H1 (cell line): ENCODE measurements at regions of chr10 and their contacts with region 1.

Region 1: DNA sequence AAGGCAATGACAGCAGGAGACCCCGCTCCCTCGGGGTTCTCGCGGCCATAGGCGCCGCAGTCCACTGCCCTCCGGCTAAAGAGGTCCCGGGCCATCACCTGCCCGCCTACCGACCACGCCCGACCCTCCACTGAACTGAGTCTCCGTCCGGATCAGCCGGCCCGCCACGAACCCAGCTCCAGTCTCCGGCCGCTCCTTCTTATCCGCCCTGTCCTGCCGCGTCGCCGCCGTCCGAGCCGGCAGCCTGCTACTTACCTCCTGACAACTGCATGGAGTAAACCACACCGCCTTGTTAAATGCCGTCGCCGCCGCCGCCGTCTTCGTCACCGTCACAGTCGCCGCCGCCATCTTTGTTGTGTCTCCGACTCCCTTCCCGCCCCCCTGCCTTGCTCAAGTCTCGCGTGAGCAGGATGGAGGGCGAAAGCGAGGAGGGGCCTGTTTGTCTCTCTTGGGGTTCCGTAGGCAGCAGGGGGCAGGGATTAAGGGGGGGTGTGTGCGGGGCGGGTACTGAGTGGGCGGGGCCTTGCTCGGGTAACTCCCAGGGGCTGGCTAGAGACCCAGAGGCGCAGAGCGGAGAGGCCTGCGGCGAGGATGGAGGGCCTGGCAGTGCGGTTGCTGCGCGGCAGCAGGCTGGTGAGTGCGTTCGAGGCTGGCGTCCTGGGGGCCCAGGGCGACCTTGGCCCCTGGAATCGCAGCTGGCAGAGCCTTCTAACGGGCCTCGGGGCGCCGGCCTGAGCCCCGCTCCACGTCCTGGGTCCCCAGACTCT is at the starts of genes ACADSB and IKZF5:
- DNase-seq: peak; percentile 90 to 95
- H3K4me3 ChIP-seq: peak within 1 kb of the TSS; percentile 86 to 90 (median 88)
- H3K27ac ChIP-seq: peak within 1 kb of the TSS; percentile 63; the same call in 1 of the 2 replicates
- H3K4me1 ChIP-seq: peaks cover 0 to 2% (median under 1%) of the 10 kb centered on the region in 4 experiments; a peak in 2 of 7 replicates
- H3K27me3 ChIP-seq: peaks cover 2 to 23% (median 16%) of the 10 kb centered on the region in 4 experiments; a peak in 5 of 7 replicates
- CTCF ChIP-seq: no peak
- EP300 ChIP-seq: peak in 1 of 2 experiments; percentile 52; a peak in 1 of 3 replicates
- POLR2A ChIP-seq: peak; percentile 60 to 89
- RAD21 ChIP-seq: no peak
- total RNA-seq, gene ACADSB: 11.2 and 12.4 TPM in 2 replicates
- total RNA-seq, gene IKZF5: 15.3 and 15.7 TPM in 2 replicates

Region 2: DNA sequence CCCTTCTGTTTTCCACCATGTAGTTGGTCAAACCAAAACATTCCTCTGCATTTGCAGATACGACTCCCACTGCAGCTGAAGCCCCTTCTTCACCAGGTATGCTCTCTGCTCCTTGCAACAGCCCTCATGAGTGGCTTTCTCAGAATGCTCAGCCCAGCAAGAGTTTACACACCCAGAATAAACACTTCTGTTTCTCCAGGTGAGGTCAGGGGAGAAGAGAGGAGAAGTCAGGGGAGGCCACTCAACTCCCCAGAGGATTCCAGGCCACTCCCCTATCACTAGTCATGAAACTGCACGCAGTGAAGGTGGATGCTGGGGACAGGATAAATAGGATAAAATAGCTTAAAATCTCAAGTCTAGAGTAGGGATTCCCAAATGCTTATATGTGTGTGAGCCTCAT is 194.1 kb before region 1 on chr10:
- CTCF ChIA-PET with region 1: no interaction called
- POLR2A ChIA-PET with region 1: no interaction called
- DNase-seq: no peak
- H3K4me3 ChIP-seq: no peak overlapping the region
- H3K27ac ChIP-seq: no peak overlapping the region
- H3K4me1 ChIP-seq: no peaks in the 10 kb centered on the region
- H3K27me3 ChIP-seq: no peaks in the 10 kb centered on the region; a peak in 1 of 7 replicates
- CTCF ChIP-seq: no peak
- EP300 ChIP-seq: no peak
- POLR2A ChIP-seq: no peak
- RAD21 ChIP-seq: no peak

Region 3: DNA sequence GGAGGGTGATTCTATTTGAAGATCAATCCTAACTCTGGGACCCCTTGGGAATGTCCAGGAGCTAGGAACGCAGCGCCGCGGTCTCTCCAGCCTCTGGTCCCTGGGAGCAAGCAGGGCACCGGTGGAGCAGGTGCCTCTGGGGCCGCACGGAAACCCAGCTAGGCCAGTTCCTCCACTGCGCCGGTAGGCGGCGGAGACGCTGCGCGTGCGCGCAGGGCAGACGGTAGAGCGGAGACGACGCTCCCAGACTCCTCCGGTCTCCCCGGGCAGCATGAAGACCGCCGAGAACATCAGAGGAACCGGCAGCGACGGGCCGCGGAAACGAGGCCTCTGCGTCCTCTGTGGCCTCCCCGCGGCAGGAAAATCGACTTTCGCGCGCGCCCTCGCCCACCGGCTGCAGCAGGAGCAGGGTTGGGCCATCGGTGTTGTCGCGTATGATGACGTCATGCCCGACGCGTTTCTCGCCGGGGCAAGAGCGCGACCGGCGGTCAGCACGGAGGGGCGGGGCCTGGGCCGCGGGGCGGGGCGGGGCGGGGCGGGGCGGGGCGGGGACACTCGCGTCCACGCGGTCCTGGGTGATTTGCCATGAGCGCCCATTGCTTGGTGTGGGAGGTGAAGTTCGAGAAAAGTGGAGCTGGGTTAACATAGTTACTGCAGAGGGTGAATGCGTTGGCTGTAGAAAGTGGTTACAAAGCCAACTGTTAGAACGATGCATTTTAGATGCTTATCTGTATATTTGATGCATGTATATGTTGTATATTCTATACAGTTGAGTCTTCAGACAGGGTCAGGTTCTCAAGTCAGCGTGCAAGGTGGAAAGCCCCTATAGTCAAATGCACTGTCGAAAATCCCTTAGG is 28.2 kb before region 1 on chr10 and contains the start of gene PSTK:
- CTCF ChIA-PET with region 1: interaction called, 7 read pairs
- POLR2A ChIA-PET with region 1: interaction called, 25 read pairs
- DNase-seq: peak; percentile 69 to 94
- H3K4me3 ChIP-seq: peak within 1 kb of the TSS; percentile 56 to 92 (median 78)
- H3K27ac ChIP-seq: peak within 1 kb of the TSS; percentile 100
- H3K4me1 ChIP-seq: peaks cover 0 to 3% (median 0%) of the 10 kb centered on the region in 4 experiments; a peak in 2 of 7 replicates
- H3K27me3 ChIP-seq: no peaks in the 10 kb centered on the region
- CTCF ChIP-seq: peak; percentile 78 to 95 (median 91)
- EP300 ChIP-seq: peak in 1 of 2 experiments; percentile 44; a peak in 1 of 3 replicates
- POLR2A ChIP-seq: peak; percentile 92 to 97
- RAD21 ChIP-seq: peak; percentile 46 to 61
- total RNA-seq, gene PSTK: 4.3 and 6.6 TPM in 2 replicates

Region 4: GRCh38 chr10:123021517-123021916 is 12.9 kb after region 1 on chr10:
- CTCF ChIA-PET with region 1: interaction called, 28 read pairs
- POLR2A ChIA-PET with region 1: interaction called, 25 read pairs
- DNase-seq: no peak
- H3K4me3 ChIP-seq: no peak overlapping the region
- H3K27ac ChIP-seq: no peak overlapping the region
- H3K4me1 ChIP-seq: peaks cover 3 to 15% (median 7%) of the 10 kb centered on the region in 4 experiments; a peak in 6 of 7 replicates
- H3K27me3 ChIP-seq: peaks cover 0 to 2% (median under 1%) of the 10 kb centered on the region in 4 experiments; a peak in 3 of 7 replicates
- CTCF ChIP-seq: peak in 2 of 3 experiments; percentile 18 to 60; a peak in 2 of 4 replicates
- EP300 ChIP-seq: no peak
- POLR2A ChIP-seq: no peak
- RAD21 ChIP-seq: peak; percentile 19 to 35; a peak in 2 of 4 replicates